ENCODE measurements at regions of chr6 and their contacts with region 1.

Region 1: GRCh38 chr6:99330159-99330558 is 19.3 kb downstream of the FAXC start:
- DNase-seq: peak; percentile 73
- ATAC-seq: peak; percentile 94
- H3K4me3 ChIP-seq: no peak overlapping the region
- H3K27ac ChIP-seq: no peak overlapping the region
- H3K4me1 ChIP-seq: no peaks in the 10 kb centered on the region
- H3K27me3 ChIP-seq: no peaks in the 10 kb centered on the region
- CTCF ChIP-seq: peak; percentile 83

Region 2: DNA sequence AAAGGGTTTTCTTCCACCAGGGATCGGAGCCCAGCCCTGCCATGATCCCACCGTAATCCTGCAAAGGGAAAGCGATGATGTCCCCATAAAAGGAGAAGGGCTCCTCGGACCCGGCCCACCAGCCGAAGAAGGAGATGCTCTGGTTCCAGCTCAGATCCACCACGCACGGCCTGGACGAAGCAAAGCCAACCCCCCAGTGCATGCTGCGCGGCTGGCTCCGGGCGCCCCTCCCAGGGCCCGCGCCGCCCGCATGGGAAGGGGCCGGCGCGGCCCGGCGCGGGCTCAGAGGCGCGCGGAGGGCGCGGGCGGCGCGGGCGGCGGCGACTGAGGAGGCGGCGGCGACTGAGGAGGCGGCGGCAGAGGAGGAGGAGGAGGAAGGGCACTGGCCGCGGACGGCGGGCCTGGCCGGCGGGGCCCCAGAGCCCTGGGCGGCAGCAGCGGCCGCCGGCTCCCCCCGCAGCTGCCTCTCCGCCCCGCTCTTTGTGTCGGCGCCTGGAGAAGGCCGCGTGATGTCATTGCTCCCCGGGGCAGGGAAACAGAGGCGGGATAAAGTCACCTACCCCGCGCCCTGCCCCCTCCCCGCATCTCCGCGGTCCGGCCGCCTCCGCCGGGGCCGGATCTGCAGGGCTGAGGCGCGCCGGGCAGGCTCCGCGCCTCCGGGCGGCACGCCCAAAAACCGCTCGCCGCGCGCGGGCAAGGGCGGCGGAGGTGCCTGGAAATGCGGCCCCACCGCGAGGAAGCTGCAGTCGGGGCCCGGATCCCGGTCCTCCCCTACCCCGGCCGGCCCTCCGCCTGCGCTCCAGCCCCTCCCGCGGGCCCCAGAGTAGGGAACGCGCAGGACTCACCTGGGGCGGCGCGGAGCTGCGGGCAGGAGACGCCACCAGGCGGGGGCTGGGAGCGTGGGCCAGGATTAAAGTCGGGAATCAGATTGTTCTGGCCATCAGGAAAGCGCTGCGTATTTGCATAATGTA is 19.3 kb after region 1 on chr6 and contains the start of gene FAXC:
- CTCF ChIA-PET with region 1: interaction called, 5 read pairs
- POLR2A ChIA-PET with region 1: no interaction called
- intact Hi-C with region 1: loop called (anchors 1 kb)
- DNase-seq: peak; percentile 58
- ATAC-seq: peak; percentile 84
- H3K4me3 ChIP-seq: peak within 1 kb of the TSS; percentile 82
- H3K27ac ChIP-seq: no peak within 1 kb of the TSS
- H3K4me1 ChIP-seq: peaks cover 21% of the 10 kb centered on the region
- H3K27me3 ChIP-seq: no peaks in the 10 kb centered on the region
- CTCF ChIP-seq: peak; percentile 42; the same call in 1 of the 2 replicates
- total RNA-seq, gene FAXC: 3.9 and 5.4 TPM in 2 replicates

Region 3: GRCh38 chr6:99614430-99615186 is 284.4 kb after region 1 on chr6:
- CTCF ChIA-PET with region 1: no interaction called
- POLR2A ChIA-PET with region 1: no interaction called
- intact Hi-C with region 1: no loop called
- DNase-seq: no peak
- ATAC-seq: no peak
- H3K4me3 ChIP-seq: no peak overlapping the region
- H3K27ac ChIP-seq: no peak overlapping the region
- H3K4me1 ChIP-seq: no peaks in the 10 kb centered on the region
- H3K27me3 ChIP-seq: peaks cover 45% of the 10 kb centered on the region
- CTCF ChIP-seq: no peak

Region 4: GRCh38 chr6:99894815-99895214 is 564.7 kb after region 1 on chr6:
- CTCF ChIA-PET with region 1: no interaction called
- POLR2A ChIA-PET with region 1: no interaction called
- intact Hi-C with region 1: no loop called
- DNase-seq: no peak
- ATAC-seq: no peak
- H3K4me3 ChIP-seq: no peak overlapping the region
- H3K27ac ChIP-seq: no peak overlapping the region
- H3K4me1 ChIP-seq: no peaks in the 10 kb centered on the region
- H3K27me3 ChIP-seq: no peaks in the 10 kb centered on the region
- CTCF ChIP-seq: no peak